ENCODE measurements at regions of chr15 and their contacts with region 1.

Region 1: GRCh38 chr15:50145451-50145872 is 26.4 kb upstream of the ATP8B4 start:
- DNase-seq: peak; percentile 19
- H3K4me3 ChIP-seq: no peak overlapping the region
- H3K27ac ChIP-seq: no peak overlapping the region
- H3K4me1 ChIP-seq: no peaks in the 10 kb centered on the region
- H3K27me3 ChIP-seq: no peaks in the 10 kb centered on the region
- CTCF ChIP-seq: peak in 3 of 4 experiments; percentile 61 to 70 (median 70)
- POLR2A ChIP-seq: no peak

Region 2: GRCh38 chr15:48861813-48862431 is 1283.5 kb before region 1 on chr15:
- intact Hi-C with region 1: loop called (anchors 5 kb)
- DNase-seq: no peak
- H3K4me3 ChIP-seq: no peak overlapping the region
- H3K27ac ChIP-seq: no peak overlapping the region
- H3K4me1 ChIP-seq: no peaks in the 10 kb centered on the region
- H3K27me3 ChIP-seq: no peaks in the 10 kb centered on the region
- CTCF ChIP-seq: peak; percentile 75 to 86 (median 82)
- POLR2A ChIP-seq: no peak

Region 3: DNA sequence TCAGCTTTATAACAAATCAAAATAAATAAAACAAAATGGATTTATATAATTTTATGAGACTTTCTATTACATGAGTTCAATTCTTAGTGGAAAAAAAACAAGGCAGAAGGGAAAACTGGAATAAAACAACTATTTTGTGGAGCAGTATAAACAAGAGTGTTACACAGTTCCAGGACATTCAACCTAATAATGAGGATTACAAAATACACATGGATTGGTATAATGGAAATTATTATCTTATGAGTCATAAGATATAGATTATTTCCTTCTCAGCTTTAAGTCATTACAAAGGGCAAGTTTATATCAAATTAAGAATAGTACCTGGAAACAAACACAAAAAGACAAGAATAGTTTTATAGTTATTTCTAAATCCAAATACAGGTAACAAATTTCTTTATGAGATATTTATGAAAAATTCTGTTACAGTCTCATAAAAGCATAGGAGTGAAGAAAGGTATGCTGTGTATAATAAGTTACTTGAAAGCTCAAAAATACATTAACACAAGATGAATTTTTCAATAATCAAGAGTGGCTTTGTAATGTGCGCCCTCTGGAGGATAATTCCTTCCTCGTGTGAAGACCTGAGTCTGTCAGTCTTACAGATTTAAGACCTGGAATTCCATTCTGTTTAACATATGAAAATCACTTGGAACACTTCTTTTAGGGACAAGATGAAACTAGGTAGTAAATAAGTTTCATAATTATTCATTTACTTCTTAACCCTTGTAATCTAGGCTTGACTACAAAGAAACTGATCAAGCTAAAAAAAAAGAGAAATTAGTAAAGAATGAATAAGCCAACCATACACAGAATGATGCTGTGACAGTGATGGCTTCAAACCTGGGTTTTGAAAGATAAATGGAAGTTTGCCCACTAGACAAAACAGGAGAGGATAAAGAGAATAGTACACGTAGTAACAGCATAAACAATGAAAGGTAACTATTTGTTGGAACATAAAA is 999.5 kb before region 1 on chr15:
- intact Hi-C with region 1: loop called (anchors 10 kb)
- DNase-seq: peak; percentile 30
- H3K4me3 ChIP-seq: no peak overlapping the region
- H3K27ac ChIP-seq: no peak overlapping the region
- H3K4me1 ChIP-seq: no peaks in the 10 kb centered on the region
- H3K27me3 ChIP-seq: no peaks in the 10 kb centered on the region
- CTCF ChIP-seq: peak; percentile 16 to 65 (median 54)
- POLR2A ChIP-seq: no peak

Region 4: DNA sequence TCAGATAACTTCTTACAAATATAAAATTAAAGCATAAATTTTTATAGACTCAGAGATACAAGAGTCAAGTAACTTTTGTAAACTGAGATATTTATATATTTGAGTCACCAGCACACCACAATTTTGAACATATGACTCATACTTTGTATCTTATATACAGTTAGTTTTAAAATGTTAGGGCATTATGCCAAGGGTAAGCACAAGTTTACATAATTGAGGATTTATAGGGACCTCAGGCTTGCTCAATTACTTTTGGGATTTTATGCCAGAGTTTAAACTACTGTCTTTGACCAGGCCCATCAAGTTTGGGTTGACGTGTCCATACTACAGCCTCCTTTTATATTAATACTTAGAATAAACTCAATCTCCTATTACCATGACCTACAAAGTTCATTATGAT is 729.8 kb before region 1 on chr15:
- intact Hi-C with region 1: loop called (anchors 10 kb)
- DNase-seq: no peak
- H3K4me3 ChIP-seq: no peak overlapping the region
- H3K27ac ChIP-seq: no peak overlapping the region
- H3K4me1 ChIP-seq: no peaks in the 10 kb centered on the region
- H3K27me3 ChIP-seq: no peaks in the 10 kb centered on the region
- CTCF ChIP-seq: no peak
- POLR2A ChIP-seq: no peak

Region 5: GRCh38 chr15:50484781-50485180 is 339.3 kb after region 1 on chr15:
- intact Hi-C with region 1: no loop called
- DNase-seq: no peak
- H3K4me3 ChIP-seq: no peak overlapping the region
- H3K27ac ChIP-seq: no peak overlapping the region
- H3K4me1 ChIP-seq: no peaks in the 10 kb centered on the region
- H3K27me3 ChIP-seq: no peaks in the 10 kb centered on the region
- CTCF ChIP-seq: no peak
- POLR2A ChIP-seq: no peak

Measured in prostate gland (tissue), 2 donors.